B cell (primary cell): ENCODE measurements at regions of chr19 and their contacts with region 1.

Region 1: GRCh38 chr19:36054119-36054732 is at the start of gene THAP8:
- DNase-seq: peak; percentile 100
- ATAC-seq: peak; percentile 82
- H3K4me3 ChIP-seq: peak within 1 kb of the TSS; percentile 63 to 90 (median 65)
- H3K4me3 Mint-ChIP-seq: peak within 1 kb of the TSS; percentile 98
- H3K27ac ChIP-seq: peak within 1 kb of the TSS; percentile 86 to 98
- H3K27ac Mint-ChIP-seq: peak within 1 kb of the TSS; percentile 94
- H3K4me1 ChIP-seq: peaks cover 9 to 18% of the 10 kb centered on the region in 2 donors
- H3K4me1 Mint-ChIP-seq: peaks cover 18% of the 10 kb centered on the region
- H3K27me3 ChIP-seq: no peaks in the 10 kb centered on the region
- H3K27me3 Mint-ChIP-seq: no peaks in the 10 kb centered on the region
- CTCF ChIP-seq: peak; percentile 72
- total RNA-seq, gene THAP8: 3.9 and 4.5 TPM in 2 replicates

Region 2: GRCh38 chr19:35612559-35613321 is 441.5 kb before region 1 on chr19 and contains the start of gene HAUS5:
- CTCF ChIA-PET with region 1: no interaction called
- POLR2A ChIA-PET with region 1: no interaction called
- intact Hi-C with region 1: loop called (anchors 1 kb)
- DNase-seq: peak; percentile 97
- ATAC-seq: peak; percentile 79
- H3K4me3 ChIP-seq: peak within 1 kb of the TSS; percentile 37 to 87 (median 78)
- H3K4me3 Mint-ChIP-seq: peak within 1 kb of the TSS; percentile 92
- H3K27ac ChIP-seq: peak within 1 kb of the TSS; percentile 76 to 77
- H3K27ac Mint-ChIP-seq: peak within 1 kb of the TSS; percentile 98
- H3K4me1 ChIP-seq: peaks cover 38 to 53% of the 10 kb centered on the region in 2 donors
- H3K4me1 Mint-ChIP-seq: peaks cover 42% of the 10 kb centered on the region
- H3K27me3 ChIP-seq: no peaks in the 10 kb centered on the region
- H3K27me3 Mint-ChIP-seq: no peaks in the 10 kb centered on the region
- CTCF ChIP-seq: no peak
- total RNA-seq, gene HAUS5: 32.2 and 35.3 TPM in 2 replicates

Region 3: GRCh38 chr19:35702223-35703012 is 351.8 kb before region 1 on chr19:
- CTCF ChIA-PET with region 1: no interaction called
- POLR2A ChIA-PET with region 1: no interaction called
- intact Hi-C with region 1: loop called (anchors 1 kb)
- DNase-seq: peak; percentile 96
- ATAC-seq: peak; percentile 99
- H3K4me3 ChIP-seq: peak overlapping the region in 4 of 5 experiments; percentile 61 to 86 (median 74)
- H3K4me3 Mint-ChIP-seq: peak overlapping the region; percentile 98
- H3K27ac ChIP-seq: peak overlapping the region; percentile 59 to 74
- H3K27ac Mint-ChIP-seq: peak overlapping the region; percentile 98
- H3K4me1 ChIP-seq: peaks cover 0 to 19% of the 10 kb centered on the region in 2 donors
- H3K4me1 Mint-ChIP-seq: peaks cover 8% of the 10 kb centered on the region
- H3K27me3 ChIP-seq: no peaks in the 10 kb centered on the region
- H3K27me3 Mint-ChIP-seq: no peaks in the 10 kb centered on the region
- CTCF ChIP-seq: no peak

Region 4: DNA sequence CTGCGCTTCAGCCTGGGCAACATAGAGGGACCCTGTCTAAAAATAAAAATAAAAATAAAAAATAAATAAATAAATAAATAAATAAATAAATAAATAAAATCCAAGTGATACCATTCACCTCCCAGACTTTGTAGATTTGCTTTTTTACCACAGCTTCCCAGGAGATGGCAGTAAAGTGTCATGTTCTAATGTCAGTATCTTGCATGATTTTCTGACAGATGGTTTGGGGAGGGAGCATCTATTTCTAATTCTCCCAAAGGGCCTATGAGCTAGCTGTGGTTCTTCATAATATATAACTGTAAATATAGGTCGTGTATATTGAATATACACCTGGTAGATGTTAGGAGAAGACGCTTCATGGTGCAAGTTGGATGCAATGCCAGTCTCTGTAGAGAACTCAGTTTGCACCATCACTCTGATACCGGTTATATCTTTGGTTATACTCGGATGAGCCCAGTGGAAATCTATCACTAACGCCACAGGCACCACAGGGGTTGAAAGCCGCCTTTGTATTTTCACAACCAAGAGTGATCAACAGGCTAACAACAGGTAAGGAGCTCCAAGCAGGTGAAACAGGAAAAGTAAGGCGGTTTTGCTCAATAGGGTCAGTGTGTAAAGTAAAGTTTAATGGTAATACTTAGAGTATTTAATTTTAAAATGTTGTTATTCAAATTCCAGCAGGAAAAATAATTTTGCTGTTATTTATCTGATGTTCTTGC is 172.0 kb before region 1 on chr19:
- CTCF ChIA-PET with region 1: no interaction called
- POLR2A ChIA-PET with region 1: no interaction called
- intact Hi-C with region 1: loop called (anchors 5 kb)
- DNase-seq: peak; percentile 84
- ATAC-seq: peak; percentile 63
- H3K4me3 ChIP-seq: no peak overlapping the region
- H3K4me3 Mint-ChIP-seq: no peak overlapping the region
- H3K27ac ChIP-seq: no peak overlapping the region
- H3K27ac Mint-ChIP-seq: peak overlapping the region; percentile 59
- H3K4me1 ChIP-seq: peaks cover 4 to 7% of the 10 kb centered on the region in 2 donors
- H3K4me1 Mint-ChIP-seq: peaks cover 17% of the 10 kb centered on the region
- H3K27me3 ChIP-seq: peaks cover 0 to 28% (median 12%) of the 10 kb centered on the region in 4 experiments
- H3K27me3 Mint-ChIP-seq: peaks cover 22% of the 10 kb centered on the region
- CTCF ChIP-seq: peak; percentile 80

Region 5: GRCh38 chr19:35977446-35978222 is 76.6 kb before region 1 on chr19:
- CTCF ChIA-PET with region 1: no interaction called
- POLR2A ChIA-PET with region 1: no interaction called
- intact Hi-C with region 1: no loop called
- DNase-seq: no peak
- ATAC-seq: peak; percentile 28
- H3K4me3 ChIP-seq: no peak overlapping the region
- H3K4me3 Mint-ChIP-seq: no peak overlapping the region
- H3K27ac ChIP-seq: no peak overlapping the region
- H3K27ac Mint-ChIP-seq: no peak overlapping the region
- H3K4me1 ChIP-seq: no peaks in the 10 kb centered on the region
- H3K4me1 Mint-ChIP-seq: no peaks in the 10 kb centered on the region
- H3K27me3 ChIP-seq: peaks cover 0 to 12% (median 0%) of the 10 kb centered on the region in 4 experiments
- H3K27me3 Mint-ChIP-seq: peaks cover 39% of the 10 kb centered on the region
- CTCF ChIP-seq: peak; percentile 30

Region 6: DNA sequence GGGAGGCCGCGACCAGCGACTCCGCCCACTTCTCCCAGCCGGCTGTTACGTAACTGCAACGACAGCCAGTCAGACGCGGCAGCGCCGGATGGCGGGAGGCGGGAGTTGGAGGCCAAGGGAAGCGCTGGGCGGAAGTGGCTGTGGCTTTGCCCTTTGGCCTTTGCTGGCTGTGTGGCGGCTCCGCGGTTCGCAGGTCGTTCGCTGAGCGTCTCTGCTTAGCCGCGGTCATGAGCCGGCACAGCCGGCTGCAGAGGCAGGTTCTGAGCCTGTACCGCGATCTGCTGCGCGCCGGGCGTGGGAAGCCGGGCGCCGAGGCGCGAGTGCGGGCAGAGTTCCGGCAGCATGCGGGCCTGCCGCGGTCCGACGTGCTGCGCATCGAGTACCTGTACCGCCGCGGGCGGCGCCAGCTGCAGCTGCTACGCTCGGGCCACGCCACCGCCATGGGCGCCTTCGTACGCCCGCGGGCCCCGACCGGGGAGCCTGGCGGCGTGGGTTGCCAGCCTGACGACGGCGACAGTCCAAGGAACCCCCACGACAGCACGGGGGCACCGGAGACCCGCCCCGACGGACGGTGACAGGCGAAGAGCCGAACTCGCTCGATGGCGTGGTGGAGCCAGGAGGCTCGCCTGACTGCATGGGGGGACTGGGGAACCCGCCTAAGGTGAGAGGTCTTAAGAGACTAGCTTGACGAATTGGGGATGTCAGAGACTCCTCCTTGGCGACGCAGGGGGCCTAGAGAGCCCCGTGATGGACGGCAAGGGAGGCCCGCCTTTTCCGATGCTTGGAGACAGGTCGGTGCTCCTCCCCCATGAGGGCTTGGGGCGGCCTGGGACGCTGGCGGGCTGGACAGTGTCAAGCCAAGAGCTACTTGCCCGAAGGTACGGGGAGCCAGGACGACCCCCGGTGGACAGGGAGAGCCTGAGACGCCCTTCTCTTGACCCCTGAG is 58.9 kb before region 1 on chr19 and contains the start of gene SDHAF1:
- CTCF ChIA-PET with region 1: no interaction called
- POLR2A ChIA-PET with region 1: interaction called, 9 read pairs
- intact Hi-C with region 1: loop called (anchors 1 kb)
- DNase-seq: peak; percentile 93
- ATAC-seq: peak; percentile 96
- H3K4me3 ChIP-seq: peak within 1 kb of the TSS; percentile 60 to 79 (median 77)
- H3K4me3 Mint-ChIP-seq: peak within 1 kb of the TSS; percentile 97
- H3K27ac ChIP-seq: peak within 1 kb of the TSS; percentile 55 to 81
- H3K27ac Mint-ChIP-seq: peak within 1 kb of the TSS; percentile 96
- H3K4me1 ChIP-seq: peaks cover 18 to 25% of the 10 kb centered on the region in 2 donors
- H3K4me1 Mint-ChIP-seq: peaks cover 32% of the 10 kb centered on the region
- H3K27me3 ChIP-seq: no peaks in the 10 kb centered on the region
- H3K27me3 Mint-ChIP-seq: no peaks in the 10 kb centered on the region
- CTCF ChIP-seq: no peak
- total RNA-seq, gene SDHAF1: 24.2 and 24.6 TPM in 2 replicates

Region 7: GRCh38 chr19:36040495-36040894 is 13.7 kb before region 1 on chr19:
- CTCF ChIA-PET with region 1: no interaction called
- POLR2A ChIA-PET with region 1: no interaction called
- intact Hi-C with region 1: no loop called
- DNase-seq: no peak
- ATAC-seq: no peak
- H3K4me3 ChIP-seq: no peak overlapping the region
- H3K4me3 Mint-ChIP-seq: no peak overlapping the region
- H3K27ac ChIP-seq: no peak overlapping the region
- H3K27ac Mint-ChIP-seq: no peak overlapping the region
- H3K4me1 ChIP-seq: no peaks in the 10 kb centered on the region
- H3K4me1 Mint-ChIP-seq: no peaks in the 10 kb centered on the region
- H3K27me3 ChIP-seq: no peaks in the 10 kb centered on the region
- H3K27me3 Mint-ChIP-seq: no peaks in the 10 kb centered on the region
- CTCF ChIP-seq: no peak

Region 8: DNA sequence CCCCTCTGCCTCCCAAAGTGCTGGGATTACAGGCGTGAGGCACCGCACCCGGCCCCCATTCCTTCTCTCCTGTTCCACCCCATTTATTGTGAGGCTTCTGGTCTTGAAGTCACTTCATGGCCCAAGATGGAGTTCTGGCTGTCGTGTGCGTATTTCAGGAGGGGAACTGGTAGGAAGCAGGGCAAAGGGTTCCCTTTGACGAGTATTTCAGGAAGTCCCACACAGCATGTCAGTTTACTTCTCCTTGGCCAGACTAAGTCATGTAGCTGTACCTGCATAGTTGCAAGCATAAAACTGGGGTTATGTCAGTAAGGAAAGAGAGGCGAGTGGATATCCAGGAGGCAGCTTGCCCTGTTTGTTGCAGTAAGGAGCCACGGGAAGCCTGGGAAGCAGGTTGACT is 10.6 kb after region 1 on chr19:
- CTCF ChIA-PET with region 1: no interaction called
- POLR2A ChIA-PET with region 1: no interaction called
- intact Hi-C with region 1: no loop called
- DNase-seq: no peak
- ATAC-seq: no peak
- H3K4me3 ChIP-seq: no peak overlapping the region
- H3K4me3 Mint-ChIP-seq: no peak overlapping the region
- H3K27ac ChIP-seq: no peak overlapping the region
- H3K27ac Mint-ChIP-seq: no peak overlapping the region
- H3K4me1 ChIP-seq: no peaks in the 10 kb centered on the region
- H3K4me1 Mint-ChIP-seq: no peaks in the 10 kb centered on the region
- H3K27me3 ChIP-seq: no peaks in the 10 kb centered on the region
- H3K27me3 Mint-ChIP-seq: no peaks in the 10 kb centered on the region
- CTCF ChIP-seq: no peak

Region 9: DNA sequence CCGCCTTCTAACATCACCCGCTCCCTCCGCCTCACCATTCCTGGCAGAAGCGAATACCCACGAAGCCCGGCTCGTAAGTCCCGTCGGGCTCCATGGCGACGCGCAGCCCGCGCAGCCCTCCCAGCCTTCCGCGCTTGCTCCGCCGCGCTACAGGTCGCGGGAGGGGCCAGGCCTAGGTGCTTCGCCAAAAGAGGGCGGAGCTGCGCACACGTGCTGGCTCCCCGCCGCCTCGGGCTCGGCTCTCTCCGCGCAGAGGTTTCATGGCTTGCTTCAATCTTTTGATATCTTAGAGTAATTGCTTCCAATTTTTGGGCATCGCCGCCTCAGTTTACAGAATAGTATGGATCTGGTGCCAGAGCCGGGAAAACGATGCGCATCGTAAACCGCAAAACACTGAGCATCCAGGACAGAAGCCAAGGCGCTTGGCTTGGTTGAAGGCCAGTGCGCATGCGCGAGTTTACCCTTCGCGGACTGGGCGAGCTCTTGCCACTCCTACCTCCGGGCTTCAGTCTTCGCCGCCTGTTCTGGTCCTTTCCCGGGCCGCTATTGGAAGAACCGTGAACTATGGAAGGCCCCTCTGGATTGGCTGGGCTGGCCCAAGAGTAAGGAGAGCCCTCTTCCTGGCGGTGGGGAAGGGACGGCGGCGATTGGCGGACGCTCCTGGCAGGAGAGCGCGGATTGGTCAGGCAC is 60.7 kb after region 1 on chr19 and contains the start of gene POLR2I:
- CTCF ChIA-PET with region 1: interaction called, 3 read pairs
- POLR2A ChIA-PET with region 1: interaction called, 22 read pairs
- intact Hi-C with region 1: loop called (anchors 1 kb)
- DNase-seq: peak; percentile 100
- ATAC-seq: peak; percentile 87
- H3K4me3 ChIP-seq: peak within 1 kb of the TSS; percentile 76 to 91 (median 79)
- H3K4me3 Mint-ChIP-seq: peak within 1 kb of the TSS; percentile 95
- H3K27ac ChIP-seq: peak within 1 kb of the TSS; percentile 84 to 90
- H3K27ac Mint-ChIP-seq: peak within 1 kb of the TSS; percentile 99
- H3K4me1 ChIP-seq: peaks cover 16 to 23% of the 10 kb centered on the region in 2 donors
- H3K4me1 Mint-ChIP-seq: peaks cover 40% of the 10 kb centered on the region
- H3K27me3 ChIP-seq: no peaks in the 10 kb centered on the region
- H3K27me3 Mint-ChIP-seq: no peaks in the 10 kb centered on the region
- CTCF ChIP-seq: no peak
- total RNA-seq, gene POLR2I: 28.2 and 33.4 TPM in 2 replicates

Region 10: DNA sequence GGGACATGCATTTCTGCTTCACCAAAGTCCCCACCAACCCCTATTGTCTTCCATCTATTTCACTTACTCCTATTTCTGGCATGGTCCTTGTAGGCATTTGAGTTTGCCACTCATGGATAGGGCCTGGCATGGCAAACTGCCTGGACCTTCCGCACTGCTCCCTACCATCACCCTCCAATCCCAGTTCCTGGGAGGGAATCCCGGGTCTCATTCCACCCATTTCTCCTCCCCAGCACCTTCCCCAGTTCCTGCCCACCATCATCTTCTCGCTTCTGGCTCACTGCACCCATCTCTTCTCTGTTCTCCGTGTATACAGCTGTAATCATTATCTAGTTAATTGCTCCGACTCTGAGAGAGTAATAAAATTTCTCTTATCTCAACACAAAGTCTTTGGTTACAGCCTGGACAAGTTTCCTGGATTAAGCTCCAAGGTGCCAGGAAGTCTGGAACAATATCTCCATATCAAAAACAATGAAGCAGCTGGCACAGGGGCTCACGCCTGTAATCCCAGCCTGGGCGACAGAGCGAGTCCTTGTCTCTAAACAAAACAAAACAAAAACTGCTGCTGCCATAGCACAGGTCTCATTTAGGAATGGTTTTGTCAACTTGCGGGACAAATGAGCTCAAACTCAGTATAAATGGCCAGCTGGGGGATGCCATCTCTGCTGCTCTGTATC is 115.0 kb after region 1 on chr19:
- CTCF ChIA-PET with region 1: no interaction called
- POLR2A ChIA-PET with region 1: no interaction called
- intact Hi-C with region 1: loop called (anchors 10 kb)
- DNase-seq: no peak
- ATAC-seq: no peak
- H3K4me3 ChIP-seq: no peak overlapping the region
- H3K4me3 Mint-ChIP-seq: no peak overlapping the region
- H3K27ac ChIP-seq: no peak overlapping the region
- H3K27ac Mint-ChIP-seq: no peak overlapping the region
- H3K4me1 ChIP-seq: peaks cover 0 to 4% of the 10 kb centered on the region in 2 donors
- H3K4me1 Mint-ChIP-seq: peaks cover 4% of the 10 kb centered on the region
- H3K27me3 ChIP-seq: no peaks in the 10 kb centered on the region
- H3K27me3 Mint-ChIP-seq: no peaks in the 10 kb centered on the region
- CTCF ChIP-seq: no peak